ENCODE measurements at regions of chr5 and their contacts with region 1.

Region 1: GRCh38 chr5:149990518-149991376 is 9.7 kb downstream of the TIGD6 start:
- DNase-seq: no peak
- H3K4me3 ChIP-seq: no peak overlapping the region
- CTCF ChIP-seq: peak; percentile 83

Region 2: DNA sequence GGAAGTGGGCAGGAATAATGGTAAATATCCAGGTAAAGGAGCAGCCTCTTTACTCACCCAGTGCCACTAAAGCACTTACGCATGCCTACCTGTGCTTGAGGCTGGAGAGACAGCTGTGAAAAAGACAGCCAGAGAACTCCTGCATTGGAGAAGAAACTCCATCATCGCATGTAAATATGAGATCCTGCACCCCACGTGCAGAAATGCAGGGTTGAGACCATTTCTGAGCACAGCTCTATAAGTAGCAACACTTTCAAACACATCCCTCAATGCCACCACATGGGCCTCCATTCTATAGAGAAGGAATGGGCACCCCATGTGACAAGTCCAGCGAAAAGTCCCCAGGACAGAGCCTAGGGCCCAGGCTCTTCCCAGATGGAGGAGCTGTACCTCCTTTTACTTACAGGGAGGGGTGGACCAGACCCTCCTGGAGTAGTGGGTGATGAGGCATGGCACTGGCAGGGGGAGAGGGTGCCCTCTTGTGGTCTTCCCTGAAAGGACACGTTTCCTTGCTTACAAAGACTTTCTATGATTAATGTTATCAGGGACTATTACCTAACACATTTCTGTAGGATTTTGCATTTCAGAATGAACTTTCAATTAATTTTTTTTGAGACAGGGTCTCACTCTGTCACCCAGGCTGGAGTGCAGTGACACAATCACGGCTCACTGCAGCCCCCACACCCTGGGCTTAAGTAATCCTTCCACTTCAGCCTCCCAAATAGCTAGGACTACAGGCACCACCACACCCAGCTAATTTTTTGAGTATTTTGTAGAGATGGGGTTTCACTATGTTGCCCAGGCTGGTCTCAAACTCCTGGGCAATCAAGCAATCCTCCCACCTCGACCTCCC is 556.4 kb before region 1 on chr5:
- CTCF ChIA-PET with region 1: no interaction called
- POLR2A ChIA-PET with region 1: no interaction called
- DNase-seq: no peak
- H3K4me3 ChIP-seq: no peak overlapping the region
- CTCF ChIP-seq: peak; percentile 86

Region 3: GRCh38 chr5:149636851-149637246 is 353.9 kb before region 1 on chr5:
- CTCF ChIA-PET with region 1: interaction called, 26 read pairs
- POLR2A ChIA-PET with region 1: no interaction called
- DNase-seq: no peak
- H3K4me3 ChIP-seq: no peak overlapping the region
- CTCF ChIP-seq: peak; percentile 86

Region 4: DNA sequence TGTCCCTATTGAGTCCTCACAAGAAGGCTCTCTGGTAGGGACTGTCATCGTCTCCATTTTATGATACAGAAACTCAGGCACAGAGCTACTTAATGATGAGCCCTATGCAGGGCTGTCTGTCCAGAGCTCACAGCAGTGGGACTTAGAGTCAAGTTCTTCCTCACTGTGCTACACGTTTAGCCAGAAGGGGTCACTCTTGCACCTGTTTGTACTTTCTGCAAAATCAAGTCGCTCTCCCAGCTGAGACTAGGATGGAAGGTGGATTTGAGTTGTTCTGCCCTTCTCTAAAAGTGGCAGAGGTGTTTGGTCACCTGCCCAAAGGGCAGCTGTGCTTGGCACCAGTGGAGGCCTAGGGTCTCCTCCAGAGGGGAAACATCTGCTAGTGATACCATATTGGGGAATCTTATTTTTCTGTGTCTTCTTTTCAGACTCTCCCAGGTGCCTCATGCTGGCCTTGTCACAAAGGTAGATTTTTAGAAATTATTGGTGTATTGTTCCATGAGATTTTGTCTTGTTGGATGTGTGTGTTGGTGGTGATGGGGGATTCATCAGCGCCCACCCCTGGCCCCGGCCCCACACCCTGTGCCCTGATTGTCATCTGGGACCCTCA is 156.4 kb before region 1 on chr5:
- CTCF ChIA-PET with region 1: interaction called, 610 read pairs
- POLR2A ChIA-PET with region 1: no interaction called
- DNase-seq: peak; percentile 49
- H3K4me3 ChIP-seq: no peak overlapping the region
- CTCF ChIP-seq: peak; percentile 78

Region 5: GRCh38 chr5:149847611-149848010 is 143.1 kb before region 1 on chr5:
- CTCF ChIA-PET with region 1: interaction called, 69 read pairs
- POLR2A ChIA-PET with region 1: no interaction called
- DNase-seq: no peak
- H3K4me3 ChIP-seq: no peak overlapping the region
- CTCF ChIP-seq: no peak

Region 6: GRCh38 chr5:149860801-149861322 is 129.9 kb before region 1 on chr5:
- CTCF ChIA-PET with region 1: interaction called, 69 read pairs
- POLR2A ChIA-PET with region 1: no interaction called
- DNase-seq: no peak
- H3K4me3 ChIP-seq: no peak overlapping the region
- CTCF ChIP-seq: no peak

Region 7: GRCh38 chr5:149969181-149969930 is 21.4 kb before region 1 on chr5:
- CTCF ChIA-PET with region 1: interaction called, 30 read pairs
- POLR2A ChIA-PET with region 1: no interaction called
- DNase-seq: no peak
- H3K4me3 ChIP-seq: no peak overlapping the region
- CTCF ChIP-seq: no peak

Region 8: GRCh38 chr5:150006318-150006717 is 15.6 kb after region 1 on chr5:
- CTCF ChIA-PET with region 1: interaction called, 15 read pairs
- POLR2A ChIA-PET with region 1: no interaction called
- DNase-seq: no peak
- H3K4me3 ChIP-seq: no peak overlapping the region
- CTCF ChIP-seq: no peak

Region 9: GRCh38 chr5:150153957-150154617 is 163.3 kb after region 1 on chr5:
- CTCF ChIA-PET with region 1: no interaction called
- POLR2A ChIA-PET with region 1: no interaction called
- DNase-seq: no peak
- H3K4me3 ChIP-seq: peak overlapping the region; percentile 74
- CTCF ChIP-seq: peak; percentile 25